K562 (cell line): ENCODE measurements at regions of chr6 and their contacts with region 1.

Region 1: DNA sequence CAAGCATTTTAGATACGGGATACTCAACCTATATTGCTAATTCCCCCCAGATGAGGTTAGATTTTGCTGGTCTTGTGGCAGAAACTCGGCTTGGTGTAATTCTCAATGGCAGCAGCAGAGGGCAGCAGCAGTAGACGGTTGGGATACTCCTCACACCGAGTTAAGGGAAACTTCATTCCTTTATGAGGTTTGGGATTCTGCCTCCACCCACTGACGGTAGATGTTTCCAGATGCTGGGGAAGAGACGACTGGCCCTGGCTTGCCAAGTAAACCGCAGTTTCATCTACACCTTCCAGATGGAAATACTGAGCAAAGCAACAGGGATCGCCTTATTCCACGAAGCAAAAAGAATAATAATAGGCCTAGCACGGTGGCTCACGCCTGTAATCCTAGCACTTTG is 8.2 kb upstream of the TBC1D7 start:
- DNase-seq: peak; percentile 79 to 84 (median 82)
- ATAC-seq: peak; percentile 89
- H3K4me3 ChIP-seq: no peak overlapping the region
- H3K27ac ChIP-seq: no peak overlapping the region
- H3K4me1 ChIP-seq: peaks cover 9% of the 10 kb centered on the region in 2 experiments
- H3K27me3 ChIP-seq: peaks cover 0 to 3% of the 10 kb centered on the region in 2 experiments; a peak in 2 of 5 replicates
- CTCF ChIP-seq: peak; percentile 92 to 94 (median 94)
- EP300 ChIP-seq: 0 out of 2 replicates have a peak, but pooled peaks have one; percentile 4
- POLR2A ChIP-seq: no peak
- RAD21 ChIP-seq: peak; percentile 86 to 87

Region 2: DNA sequence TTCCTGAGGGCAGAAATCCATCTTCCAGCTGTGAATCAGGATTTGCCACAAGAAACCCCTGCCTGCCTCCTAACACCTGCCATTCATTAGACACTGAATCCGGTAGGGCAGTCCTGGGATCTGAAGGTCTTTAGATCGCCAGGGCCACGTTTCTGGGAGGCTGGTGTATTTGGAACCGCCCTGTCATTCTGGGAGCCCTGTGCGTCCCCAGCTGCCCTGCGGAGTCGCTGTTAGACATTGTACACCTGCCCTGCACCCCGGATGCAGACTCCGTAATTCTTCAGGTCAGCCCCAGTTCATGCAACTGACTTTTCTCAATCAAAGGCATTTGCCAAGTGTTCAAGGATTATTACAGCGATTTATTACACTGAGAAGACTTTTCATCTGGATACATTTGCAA is 201.4 kb before region 1 on chr6:
- CTCF ChIA-PET with region 1: no interaction called
- POLR2A ChIA-PET with region 1: no interaction called
- in situ Hi-C with region 1: no loop called
- intact Hi-C with region 1: no loop called
- DNase-seq: no peak
- ATAC-seq: peak; percentile 76
- H3K4me3 ChIP-seq: no peak overlapping the region
- H3K27ac ChIP-seq: no peak overlapping the region
- H3K4me1 ChIP-seq: no peaks in the 10 kb centered on the region
- H3K27me3 ChIP-seq: peaks cover 9 to 11% of the 10 kb centered on the region in 2 experiments; a peak in 4 of 5 replicates
- CTCF ChIP-seq: no peak
- EP300 ChIP-seq: no peak
- POLR2A ChIP-seq: no peak
- RAD21 ChIP-seq: no peak

Region 3: GRCh38 chr6:13355043-13355951 is 18.7 kb after region 1 on chr6:
- CTCF ChIA-PET with region 1: no interaction called
- POLR2A ChIA-PET with region 1: interaction called, 6 read pairs
- in situ Hi-C with region 1: no loop called
- intact Hi-C with region 1: loop called (anchors 2 kb)
- DNase-seq: peak; percentile 20 to 83 (median 46)
- ATAC-seq: peak; percentile 86
- H3K4me3 ChIP-seq: no peak overlapping the region
- H3K27ac ChIP-seq: peak overlapping the region; percentile 61; the same call in 2 of the 3 replicates
- H3K4me1 ChIP-seq: peaks cover 24 to 51% of the 10 kb centered on the region in 2 experiments
- H3K27me3 ChIP-seq: no peaks in the 10 kb centered on the region
- CTCF ChIP-seq: no peak
- EP300 ChIP-seq: peak; percentile 89
- POLR2A ChIP-seq: no peak
- RAD21 ChIP-seq: peak; percentile 14 to 23; a peak in 1 of 4 replicates

Region 4: DNA sequence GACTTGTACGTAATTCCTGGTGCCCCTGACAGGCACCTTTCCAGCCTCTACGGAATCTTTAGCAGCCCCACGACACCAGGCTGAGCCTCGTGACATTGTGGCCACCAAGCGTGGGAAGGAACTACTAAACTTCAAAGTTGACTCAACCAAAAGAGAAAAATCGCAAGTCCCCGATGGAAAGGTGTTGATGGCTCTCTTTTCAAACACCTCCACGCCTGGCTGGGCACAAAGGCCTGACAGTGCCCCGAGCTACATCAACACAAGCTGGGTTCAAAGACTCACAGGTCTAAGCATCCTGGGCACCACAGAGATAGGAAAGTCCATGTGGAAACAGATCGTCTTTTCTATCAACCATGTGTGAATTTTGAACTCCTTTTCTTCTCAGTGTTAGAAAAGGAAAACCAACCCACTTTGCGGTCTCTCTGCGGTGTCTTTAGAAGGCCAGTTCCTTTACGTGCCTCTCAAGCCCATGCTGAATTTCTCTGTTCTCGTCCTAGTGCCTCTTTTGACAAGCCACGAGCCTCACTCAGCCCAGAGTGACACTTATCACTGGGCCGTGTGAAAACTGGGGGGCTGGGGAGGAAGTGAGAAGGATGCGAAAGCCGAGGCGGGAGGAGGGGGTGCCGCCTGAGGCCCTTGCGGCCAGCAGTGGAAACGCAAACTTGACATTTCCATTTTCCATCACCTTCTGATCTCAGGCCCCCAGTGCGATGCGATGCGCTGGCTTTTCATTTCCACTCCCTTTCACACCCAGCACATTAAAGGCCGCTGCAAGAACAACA is 91.4 kb after region 1 on chr6:
- CTCF ChIA-PET with region 1: no interaction called
- POLR2A ChIA-PET with region 1: no interaction called
- in situ Hi-C with region 1: no loop called
- intact Hi-C with region 1: loop called (anchors 2 kb)
- DNase-seq: peak in 2 of 4 experiments; percentile 34 to 46
- ATAC-seq: peak; percentile 66
- H3K4me3 ChIP-seq: no peak overlapping the region
- H3K27ac ChIP-seq: no peak overlapping the region
- H3K4me1 ChIP-seq: peaks cover 3 to 15% of the 10 kb centered on the region in 2 experiments; a peak in 3 of 5 replicates
- H3K27me3 ChIP-seq: no peaks in the 10 kb centered on the region
- CTCF ChIP-seq: peak in 2 of 3 experiments; percentile 32 to 41; a peak in 2 of 6 replicates
- EP300 ChIP-seq: no peak
- POLR2A ChIP-seq: no peak
- RAD21 ChIP-seq: no peak; a peak in 1 of 4 replicates

Region 5: DNA sequence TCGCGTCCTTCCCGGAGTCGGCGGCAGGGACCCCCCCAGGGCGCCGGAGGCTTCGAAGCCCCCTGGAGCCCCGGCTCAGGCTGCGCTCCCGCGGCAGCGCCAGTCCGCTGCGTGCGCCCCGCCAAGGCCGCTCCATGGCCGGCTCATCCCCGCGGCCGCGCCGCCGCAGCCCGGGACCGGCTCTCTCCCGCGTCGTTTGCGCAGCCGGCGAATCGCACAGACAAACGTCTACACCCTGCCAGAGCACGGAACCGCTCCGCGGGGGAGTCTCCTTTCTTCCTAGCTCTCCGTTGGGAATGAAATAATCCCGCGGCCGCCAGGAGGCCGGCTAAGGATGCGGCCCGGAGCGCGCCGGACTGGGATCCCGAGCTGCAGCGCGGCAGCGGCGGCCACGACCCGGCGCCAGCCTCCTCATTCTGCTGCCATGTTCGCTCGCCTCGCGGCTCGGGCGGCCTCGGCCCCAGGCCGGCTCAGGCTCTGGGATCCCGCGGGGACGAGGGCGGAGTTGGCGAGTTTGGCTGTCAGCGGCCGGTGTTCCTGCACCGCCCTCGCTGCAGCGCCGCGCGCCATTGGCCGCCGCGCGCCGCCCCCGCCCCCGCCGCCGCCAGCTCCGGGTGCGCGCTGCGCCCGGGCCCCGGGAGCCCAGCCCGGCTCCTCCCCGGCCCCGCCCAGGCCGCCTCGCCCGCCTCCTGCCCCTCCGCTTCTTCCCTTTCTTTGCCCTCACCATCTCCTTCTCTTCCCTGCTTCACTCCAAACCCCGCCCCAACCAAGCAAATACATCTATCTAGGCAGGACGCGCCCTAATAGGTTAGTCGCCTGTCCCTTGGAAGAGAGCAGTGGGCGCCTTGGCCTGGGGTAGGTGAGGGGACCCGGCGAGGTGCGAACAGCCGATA is 150.8 kb after region 1 on chr6 and contains the start of gene GFOD1:
- CTCF ChIA-PET with region 1: no interaction called
- POLR2A ChIA-PET with region 1: no interaction called
- in situ Hi-C with region 1: no loop called
- intact Hi-C with region 1: loop called (anchors 2 kb)
- DNase-seq: peak; percentile 91 to 98 (median 97)
- ATAC-seq: peak; percentile 86
- H3K4me3 ChIP-seq: peak within 1 kb of the TSS; percentile 62
- H3K27ac ChIP-seq: peak within 1 kb of the TSS; percentile 68; the same call in 2 of the 3 replicates
- H3K4me1 ChIP-seq: peaks cover 21 to 31% of the 10 kb centered on the region in 2 experiments
- H3K27me3 ChIP-seq: no peaks in the 10 kb centered on the region; a peak in 1 of 5 replicates
- CTCF ChIP-seq: no peak
- EP300 ChIP-seq: no peak
- POLR2A ChIP-seq: peak; percentile 75
- RAD21 ChIP-seq: no peak; a peak in 1 of 4 replicates
- polyA plus RNA-seq, gene GFOD1: 5.4 to 5.9 TPM

Region 6: DNA sequence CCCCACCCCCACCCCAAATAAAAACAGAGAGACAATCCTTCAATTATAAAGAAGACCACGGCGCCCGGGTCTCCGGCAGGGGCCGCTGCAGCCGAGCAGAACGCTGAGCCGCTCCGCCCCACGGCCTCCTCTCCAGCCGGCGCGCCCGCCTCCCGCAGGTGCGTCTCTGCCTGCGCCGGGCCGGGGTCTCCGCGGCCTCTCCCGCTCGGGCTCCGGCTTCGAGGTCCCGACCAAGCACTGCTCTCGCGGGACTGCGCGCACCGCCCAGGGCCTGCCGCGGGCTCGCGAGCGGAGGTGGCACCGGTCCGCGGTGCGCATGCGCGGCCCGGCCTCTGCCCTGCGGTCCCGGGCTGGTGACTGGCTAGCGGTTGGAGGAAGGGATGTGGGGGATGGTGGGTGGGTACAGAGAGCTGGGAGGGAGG is 237.6 kb after region 1 on chr6:
- CTCF ChIA-PET with region 1: no interaction called
- POLR2A ChIA-PET with region 1: no interaction called
- in situ Hi-C with region 1: no loop called
- intact Hi-C with region 1: loop called (anchors 10 kb)
- DNase-seq: peak; percentile 97 to 99 (median 98)
- ATAC-seq: peak; percentile 90
- H3K4me3 ChIP-seq: peak overlapping the region; percentile 56
- H3K27ac ChIP-seq: peak overlapping the region; percentile 87
- H3K4me1 ChIP-seq: peaks cover 17 to 20% of the 10 kb centered on the region in 2 experiments
- H3K27me3 ChIP-seq: no peaks in the 10 kb centered on the region; a peak in 1 of 5 replicates
- CTCF ChIP-seq: peak; percentile 49 to 88 (median 74); a peak in 5 of 6 replicates
- EP300 ChIP-seq: no peak
- POLR2A ChIP-seq: no peak
- RAD21 ChIP-seq: peak; percentile 59 to 66

Region 7: GRCh38 chr6:14066782-14067406 is 730.3 kb after region 1 on chr6:
- CTCF ChIA-PET with region 1: interaction called, 3 read pairs
- POLR2A ChIA-PET with region 1: no interaction called
- in situ Hi-C with region 1: no loop called
- intact Hi-C with region 1: loop called (anchors 5 kb)
- DNase-seq: peak; percentile 69 to 83 (median 74)
- ATAC-seq: peak; percentile 94
- H3K4me3 ChIP-seq: no peak overlapping the region
- H3K27ac ChIP-seq: no peak overlapping the region
- H3K4me1 ChIP-seq: no peaks in the 10 kb centered on the region
- H3K27me3 ChIP-seq: no peaks in the 10 kb centered on the region
- CTCF ChIP-seq: peak; percentile 77 to 92 (median 79)
- EP300 ChIP-seq: no peak
- POLR2A ChIP-seq: no peak
- RAD21 ChIP-seq: peak; percentile 96 to 98